Dorsolateral prefrontal cortex (tissue), 120 donors: ENCODE measurements at regions of chr10 and their contacts with region 1.

Region 1: GRCh38 chr10:131743190-131744151 is 157.3 kb upstream of the PPP2R2D start:
- DNase-seq: peak in 6 of 10 donors; percentile 10 to 80 (median 65)
- H3K4me3 ChIP-seq: no peak overlapping the region
- H3K27ac ChIP-seq: peak overlapping the region in 39 of 59 donors; percentile 10 to 83 (median 58)
- H3K27me3 ChIP-seq: peaks cover 0 to 32% (median 0%) of the 10 kb centered on the region in 45 donors
- CTCF ChIP-seq: no peak

Region 2: DNA sequence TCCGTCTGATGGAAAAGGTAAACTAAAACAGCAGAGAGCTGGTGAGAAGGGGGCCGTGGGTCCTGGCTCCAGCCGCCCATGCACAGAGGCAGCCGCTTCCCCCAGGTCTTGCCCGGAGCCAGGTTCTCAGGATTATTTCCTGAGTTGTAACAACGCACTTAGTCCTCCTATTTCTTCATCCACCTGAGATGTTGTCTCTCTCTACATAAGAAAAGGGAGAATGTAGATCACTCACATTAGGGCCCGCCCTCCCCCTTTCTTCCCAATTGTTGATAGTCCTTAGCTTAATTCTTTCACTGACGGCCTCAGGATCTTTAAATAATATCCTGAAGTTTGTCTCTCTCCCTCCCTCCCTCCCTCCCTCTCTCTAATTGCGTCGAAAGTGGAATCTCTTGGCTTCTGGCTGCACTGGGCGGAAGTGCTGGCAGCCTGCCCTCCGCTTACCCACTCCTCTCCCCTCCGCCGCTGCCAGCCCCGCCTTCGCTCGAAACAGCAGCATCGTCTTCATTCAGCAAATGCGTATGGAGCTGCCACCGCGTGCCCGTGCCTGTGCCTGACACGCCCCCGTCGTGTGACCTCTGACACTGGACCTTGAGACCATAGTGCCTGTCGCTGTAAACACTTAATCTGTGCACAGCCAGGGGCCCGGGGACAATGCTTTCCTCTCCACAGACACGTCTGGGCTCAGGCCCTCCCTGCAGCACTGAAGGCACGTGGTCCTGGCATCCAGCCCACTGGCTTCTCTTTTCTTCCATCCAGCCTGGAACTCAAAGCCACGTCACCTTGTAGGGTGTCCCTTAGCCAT is 17.2 kb before region 1 on chr10:
- intact Hi-C with region 1: no loop called
- DNase-seq: peak in 6 of 10 donors; percentile 46 to 63 (median 50)
- H3K4me3 ChIP-seq: peak overlapping the region in 46 of 59 donors; percentile 1 to 60 (median 30)
- H3K27ac ChIP-seq: no peak overlapping the region
- H3K27me3 ChIP-seq: peaks cover 0 to 5% (median 0%) of the 10 kb centered on the region in 45 donors
- CTCF ChIP-seq: no peak

Region 3: GRCh38 chr10:131775833-131776232 is 32.4 kb after region 1 on chr10:
- intact Hi-C with region 1: loop called in 1 of 2 experiments (anchors 1 kb)
- DNase-seq: peak in 2 of 10 donors; percentile 11 to 33
- H3K4me3 ChIP-seq: no peak overlapping the region
- H3K27ac ChIP-seq: peak overlapping the region in 14 of 59 donors; percentile 7 to 71 (median 40)
- H3K27me3 ChIP-seq: peaks cover 0 to 26% (median 0%) of the 10 kb centered on the region in 45 donors
- CTCF ChIP-seq: no peak

Region 4: GRCh38 chr10:131972474-131973071 is 229.1 kb after region 1 on chr10:
- intact Hi-C with region 1: no loop called
- DNase-seq: peak in 3 of 10 donors; percentile 49 to 68 (median 50)
- H3K4me3 ChIP-seq: peak overlapping the region in 30 of 59 donors; percentile 7 to 43 (median 20)
- H3K27ac ChIP-seq: peak overlapping the region in 48 of 59 donors; percentile 1 to 84 (median 64)
- H3K27me3 ChIP-seq: no peaks in the 10 kb centered on the region
- CTCF ChIP-seq: peak in 2 of 56 donors; percentile 5 to 14